HCT116 (cell line): ENCODE measurements at regions of chr6 and their contacts with region 1.

Region 1: DNA sequence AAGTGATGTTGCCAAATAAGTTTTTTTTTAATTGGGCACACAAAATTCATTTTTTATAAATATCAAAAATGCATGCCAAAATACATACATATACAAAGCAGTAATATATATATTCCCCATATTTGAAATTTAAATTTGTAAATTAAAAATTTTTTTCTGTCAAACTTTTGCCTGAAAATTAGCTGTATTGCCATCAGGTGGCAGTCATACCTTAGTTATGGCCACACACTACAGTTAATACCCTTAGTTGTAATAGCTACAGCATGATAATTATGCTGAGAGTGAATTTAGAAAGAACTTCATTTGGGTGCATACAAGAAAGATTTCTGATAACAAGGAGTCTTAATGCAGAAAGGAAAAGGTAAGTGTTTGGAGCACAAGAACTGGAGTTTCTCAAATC is 46.2 kb upstream of the SDHAF4 start:
- DNase-seq: no peak
- ATAC-seq: peak; percentile 55; the same call in 1 of the 2 replicates
- H3K4me3 ChIP-seq: no peak overlapping the region
- H3K27ac ChIP-seq: no peak overlapping the region
- H3K4me1 ChIP-seq: no peaks in the 10 kb centered on the region
- H3K27me3 ChIP-seq: no peaks in the 10 kb centered on the region
- CTCF ChIP-seq: peak; percentile 35 to 47 (median 37); a peak in 3 of 6 replicates
- POLR2A ChIP-seq: no peak
- RAD21 ChIP-seq: peak; percentile 59

Region 2: DNA sequence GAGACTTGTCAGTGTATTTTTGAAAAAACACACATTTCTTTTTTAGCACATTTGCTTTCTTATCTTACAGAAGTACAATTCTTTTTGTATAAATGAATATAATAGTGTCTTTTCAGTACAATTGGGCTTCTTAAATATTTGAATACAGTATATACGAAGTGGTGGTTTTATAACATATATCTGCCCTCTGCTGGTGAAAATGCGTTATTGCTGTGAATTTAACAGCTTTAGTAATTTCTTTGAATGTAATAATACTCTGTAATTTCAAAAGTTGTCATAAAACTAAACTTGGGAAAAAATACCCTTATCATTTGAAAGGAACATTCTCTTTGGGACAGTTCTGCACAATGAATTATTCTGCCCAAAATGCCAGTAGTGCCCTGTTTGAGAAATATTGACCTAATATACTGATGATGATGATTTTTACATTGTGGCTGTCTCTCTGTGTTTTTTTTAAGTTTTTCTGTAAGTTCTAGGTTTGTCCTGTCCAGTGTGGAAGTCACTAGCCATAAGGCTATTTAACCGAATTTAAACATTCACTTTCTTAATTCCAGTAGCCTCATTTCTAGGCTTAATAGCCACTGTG is 166.1 kb after region 1 on chr6:
- CTCF ChIA-PET with region 1: interaction called, 63 read pairs
- POLR2A ChIA-PET with region 1: no interaction called
- RAD21 ChIA-PET with region 1: interaction called, 5 to 6 read pairs
- intact Hi-C with region 1: loop called (anchors 2 kb)
- DNase-seq: no peak
- ATAC-seq: peak; percentile 62; the same call in 1 of the 2 replicates
- H3K4me3 ChIP-seq: no peak overlapping the region
- H3K27ac ChIP-seq: no peak overlapping the region
- H3K4me1 ChIP-seq: peaks cover 0 to 4% of the 10 kb centered on the region in 2 experiments; a peak in 1 of 4 replicates
- H3K27me3 ChIP-seq: no peaks in the 10 kb centered on the region
- CTCF ChIP-seq: peak; percentile 45 to 78 (median 58); a peak in 4 of 6 replicates
- POLR2A ChIP-seq: no peak
- RAD21 ChIP-seq: peak; percentile 65

Region 3: GRCh38 chr6:70884074-70884983 is 363.8 kb after region 1 on chr6:
- CTCF ChIA-PET with region 1: interaction called, 27 read pairs
- POLR2A ChIA-PET with region 1: no interaction called
- RAD21 ChIA-PET with region 1: interaction called in 1 of 2 experiments, 3 read pairs
- intact Hi-C with region 1: loop called (anchors 1 kb)
- DNase-seq: peak; percentile 32
- ATAC-seq: peak; percentile 98
- H3K4me3 ChIP-seq: no peak overlapping the region
- H3K27ac ChIP-seq: no peak overlapping the region
- H3K4me1 ChIP-seq: no peaks in the 10 kb centered on the region
- H3K27me3 ChIP-seq: no peaks in the 10 kb centered on the region
- CTCF ChIP-seq: peak; percentile 80 to 90 (median 90)
- POLR2A ChIP-seq: no peak
- RAD21 ChIP-seq: peak; percentile 86

Region 4: DNA sequence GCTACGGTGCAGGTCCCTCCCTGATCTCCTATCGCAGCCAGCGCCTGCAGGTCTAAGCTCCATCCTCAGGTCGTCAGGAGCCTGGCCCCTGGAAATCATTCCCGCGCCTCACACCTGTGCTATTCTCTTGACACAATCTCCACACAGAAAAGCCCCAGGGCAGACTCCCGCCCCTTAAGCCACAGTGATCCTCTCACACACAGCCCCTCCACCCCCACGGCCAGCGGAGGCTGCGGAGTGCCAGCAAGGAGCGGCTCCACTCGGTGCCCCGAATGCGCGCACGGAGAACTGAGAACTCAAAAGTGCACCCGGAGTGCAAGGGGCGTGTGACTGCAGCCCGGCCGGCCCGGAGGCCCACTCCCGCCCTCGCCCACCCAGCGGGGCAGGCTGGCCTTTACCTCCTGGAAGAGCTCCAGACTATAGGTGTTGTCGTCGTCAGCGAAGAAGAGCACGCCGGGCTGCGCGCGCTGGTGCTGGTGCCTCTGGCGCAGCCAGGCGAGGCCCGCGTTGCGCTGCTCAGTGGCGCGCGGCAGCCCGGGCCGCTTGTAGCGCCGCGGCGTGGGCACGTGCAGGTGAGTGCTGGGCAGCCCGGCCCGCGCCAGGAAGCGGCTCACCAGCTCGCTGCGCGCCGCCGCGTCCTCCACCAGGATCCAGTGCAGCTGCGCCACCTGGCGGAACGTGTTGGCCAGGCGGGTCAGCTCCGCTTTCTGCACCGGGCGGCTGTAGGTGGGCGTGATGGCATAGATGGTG is 435.0 kb after region 1 on chr6:
- CTCF ChIA-PET with region 1: interaction called, 38 read pairs
- POLR2A ChIA-PET with region 1: no interaction called
- RAD21 ChIA-PET with region 1: interaction called in 1 of 2 experiments, 5 read pairs
- intact Hi-C with region 1: loop called (anchors 5 kb)
- DNase-seq: peak; percentile 60
- ATAC-seq: peak; percentile 100
- H3K4me3 ChIP-seq: no peak overlapping the region
- H3K27ac ChIP-seq: no peak overlapping the region
- H3K4me1 ChIP-seq: peaks cover 3 to 5% of the 10 kb centered on the region in 2 experiments; a peak in 2 of 4 replicates
- H3K27me3 ChIP-seq: peaks cover 21% of the 10 kb centered on the region; the same call in 1 of the 2 replicates
- CTCF ChIP-seq: peak; percentile 63 to 85 (median 78)
- POLR2A ChIP-seq: no peak
- RAD21 ChIP-seq: peak; percentile 77

Region 5: DNA sequence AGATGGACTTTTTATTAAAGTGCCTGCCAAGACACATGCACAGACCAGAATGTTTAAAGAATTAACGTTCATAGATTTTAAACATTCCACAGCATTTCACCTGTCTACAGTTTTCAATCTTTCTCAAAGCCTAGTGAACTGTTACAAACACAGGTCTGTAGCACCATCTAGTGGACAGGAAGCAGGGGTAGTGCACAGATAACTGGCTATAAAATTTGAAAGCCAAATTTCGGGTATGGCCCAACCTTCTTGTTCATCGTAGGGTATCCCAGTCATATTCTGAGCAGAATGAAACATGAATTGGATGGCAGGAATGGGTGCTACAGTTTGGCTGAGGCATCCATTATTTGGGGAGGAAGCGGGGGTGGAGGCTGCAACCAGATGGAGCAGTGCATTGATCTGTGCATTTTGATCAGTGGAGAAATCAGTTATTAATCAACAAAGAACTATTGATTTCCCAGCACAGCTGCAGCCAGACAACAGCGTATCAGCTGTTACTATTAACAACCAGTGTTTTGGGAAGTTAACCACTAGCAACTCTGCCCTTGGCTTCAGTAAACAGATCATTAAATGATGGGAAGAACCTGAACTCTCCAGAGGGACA is 492.4 kb after region 1 on chr6:
- CTCF ChIA-PET with region 1: interaction called, 5 read pairs
- POLR2A ChIA-PET with region 1: no interaction called
- RAD21 ChIA-PET with region 1: no interaction called
- intact Hi-C with region 1: loop called (anchors 2 kb)
- DNase-seq: peak; percentile 42
- ATAC-seq: peak; percentile 94
- H3K4me3 ChIP-seq: no peak overlapping the region
- H3K27ac ChIP-seq: no peak overlapping the region
- H3K4me1 ChIP-seq: no peaks in the 10 kb centered on the region
- H3K27me3 ChIP-seq: no peaks in the 10 kb centered on the region; the same call in 1 of the 2 replicates
- CTCF ChIP-seq: peak; percentile 51 to 90 (median 85); a peak in 5 of 6 replicates
- POLR2A ChIP-seq: no peak
- RAD21 ChIP-seq: peak; percentile 68